ENCODE measurements at regions of chr2 and their contacts with region 1.

Region 1: DNA sequence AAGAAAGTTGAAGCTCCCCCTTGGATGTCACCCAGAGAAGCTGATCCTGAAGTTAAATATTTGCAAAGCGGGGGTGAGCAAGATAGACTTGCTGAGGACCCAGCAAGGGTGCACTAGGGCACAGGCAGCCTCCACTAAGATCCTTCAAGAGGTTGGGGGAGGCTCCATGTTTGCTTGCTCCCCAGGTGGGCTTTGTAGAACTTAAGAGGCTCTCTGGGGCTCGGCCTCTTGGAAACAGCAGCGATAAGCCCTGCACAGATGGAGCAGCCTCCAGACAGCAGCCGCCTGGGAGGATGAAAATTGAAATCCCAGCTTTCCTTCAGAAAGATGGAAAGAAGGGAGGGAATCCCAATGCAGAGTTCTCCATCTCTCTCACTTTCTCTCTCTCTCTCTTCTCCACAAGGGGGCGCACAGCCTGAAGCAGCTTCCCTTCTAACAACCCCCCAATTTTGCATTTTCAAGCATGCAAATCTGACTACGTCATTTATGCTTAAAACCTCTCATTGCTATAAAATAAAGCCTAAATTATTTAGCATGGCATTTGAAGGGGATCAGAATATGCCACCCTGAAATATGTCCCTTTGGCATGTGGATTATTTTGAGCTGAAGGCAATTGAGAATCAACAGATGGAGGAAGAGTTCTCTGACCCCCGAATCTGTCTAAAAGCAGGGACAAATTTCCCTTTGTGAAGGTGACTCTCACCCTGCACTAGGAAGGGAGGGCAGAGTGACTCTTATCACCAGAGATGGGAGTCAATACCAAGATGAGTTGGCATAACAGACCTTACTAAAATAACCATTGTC is 185.7 kb upstream of the KLHL29 start:
- DNase-seq: peak; percentile 66
- H3K4me3 Mint-ChIP-seq: no peak overlapping the region
- H3K27ac Mint-ChIP-seq: no peak overlapping the region
- H3K4me1 Mint-ChIP-seq: no peaks in the 10 kb centered on the region
- H3K27me3 Mint-ChIP-seq: peaks cover 8% of the 10 kb centered on the region

Region 2: GRCh38 chr2:23169896-23170295 is 29.4 kb before region 1 on chr2:
- intact Hi-C with region 1: no loop called
- DNase-seq: no peak
- H3K4me3 Mint-ChIP-seq: no peak overlapping the region
- H3K27ac Mint-ChIP-seq: no peak overlapping the region
- H3K4me1 Mint-ChIP-seq: no peaks in the 10 kb centered on the region
- H3K27me3 Mint-ChIP-seq: no peaks in the 10 kb centered on the region

Region 3: GRCh38 chr2:23351388-23352141 is 152.2 kb after region 1 on chr2:
- intact Hi-C with region 1: loop called (anchors 1 kb)
- DNase-seq: peak; percentile 86
- H3K4me3 Mint-ChIP-seq: no peak overlapping the region
- H3K27ac Mint-ChIP-seq: no peak overlapping the region
- H3K4me1 Mint-ChIP-seq: no peaks in the 10 kb centered on the region
- H3K27me3 Mint-ChIP-seq: peaks cover 22% of the 10 kb centered on the region

Region 4: GRCh38 chr2:23460228-23460627 is 260.9 kb after region 1 on chr2:
- intact Hi-C with region 1: loop called (anchors 2 kb)
- DNase-seq: no peak
- H3K4me3 Mint-ChIP-seq: no peak overlapping the region
- H3K27ac Mint-ChIP-seq: no peak overlapping the region
- H3K4me1 Mint-ChIP-seq: peaks cover 4% of the 10 kb centered on the region
- H3K27me3 Mint-ChIP-seq: peaks cover 10% of the 10 kb centered on the region

Measured in activated CD4-positive, alpha-beta T cell treated with anti-CD3 and anti-CD28 coated beads, Interleukin-2, amount 10 ng/mL, durations not matched to agents 24 days and 14 days (primary cell).